HepG2 (cell line): ENCODE measurements at regions of chr2 and their contacts with region 1.

Region 1: DNA sequence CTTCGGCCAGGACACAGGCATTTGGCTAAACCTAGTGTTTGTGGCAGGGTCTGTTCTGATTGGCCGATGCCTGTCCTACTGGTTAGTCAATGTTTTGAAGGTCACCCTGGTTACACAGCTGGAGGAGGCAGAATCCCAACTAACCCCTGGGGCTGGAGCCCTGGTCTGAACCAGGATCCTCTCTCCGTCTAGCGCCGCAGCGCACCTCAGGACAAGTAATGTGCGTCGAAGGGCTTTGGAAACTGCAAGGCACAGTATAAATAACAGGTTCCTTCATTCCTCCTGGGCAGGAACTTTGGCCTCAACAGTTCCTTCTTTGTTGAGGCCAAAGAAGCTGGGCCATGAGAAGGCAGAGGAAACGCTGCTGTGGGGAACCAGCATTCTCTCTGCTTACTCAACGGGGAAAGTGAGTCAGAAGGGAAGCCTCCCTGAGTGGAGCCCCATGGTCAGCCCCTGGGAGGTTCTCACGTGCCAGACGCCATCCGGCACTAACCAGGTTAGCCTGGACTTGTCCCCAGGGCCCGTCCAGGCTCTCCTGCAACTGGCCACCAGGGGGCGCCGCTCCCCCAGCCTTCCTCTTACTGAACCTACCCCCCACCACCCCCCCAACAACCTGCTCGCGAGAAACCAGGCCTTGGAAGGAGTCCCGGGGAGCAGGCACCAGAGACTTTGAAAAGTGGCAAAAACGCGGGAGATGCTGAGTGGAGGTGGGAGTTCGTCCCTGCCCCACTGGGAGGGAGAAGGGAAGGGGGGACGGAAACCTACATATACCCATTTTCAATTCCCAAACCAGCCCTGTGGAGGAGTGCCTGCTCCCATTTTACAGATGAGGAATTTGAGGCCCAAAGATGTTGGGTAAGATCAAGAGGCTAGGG is 19.8 kb downstream of the TEX44 start:
- DNase-seq: peak; percentile 80
- ATAC-seq: peak; percentile 72
- H3K4me3 ChIP-seq: peak overlapping the region in 1 of 3 experiments; percentile 45; a peak in 2 of 6 replicates
- H3K27ac ChIP-seq: peak overlapping the region; percentile 28
- H3K4me1 ChIP-seq: peaks cover 62% of the 10 kb centered on the region
- H3K27me3 ChIP-seq: peaks cover 3 to 8% of the 10 kb centered on the region in 2 experiments; a peak in 2 of 5 replicates
- CTCF ChIP-seq: peak; percentile 96
- EP300 ChIP-seq: no peak
- POLR2A ChIP-seq: no peak
- RAD21 ChIP-seq: peak; percentile 91

Region 2: GRCh38 chr2:231590619-231591018 is 21.8 kb before region 1 on chr2:
- CTCF ChIA-PET with region 1: no interaction called
- POLR2A ChIA-PET with region 1: no interaction called
- in situ Hi-C with region 1: no loop called
- intact Hi-C with region 1: no loop called
- DNase-seq: no peak
- ATAC-seq: no peak; the same call in 2 of the 3 replicates
- H3K4me3 ChIP-seq: no peak overlapping the region
- H3K27ac ChIP-seq: no peak overlapping the region
- H3K4me1 ChIP-seq: no peaks in the 10 kb centered on the region
- H3K27me3 ChIP-seq: peaks cover 4 to 40% of the 10 kb centered on the region in 2 experiments
- CTCF ChIP-seq: no peak
- EP300 ChIP-seq: no peak
- POLR2A ChIP-seq: no peak
- RAD21 ChIP-seq: no peak

Region 3: DNA sequence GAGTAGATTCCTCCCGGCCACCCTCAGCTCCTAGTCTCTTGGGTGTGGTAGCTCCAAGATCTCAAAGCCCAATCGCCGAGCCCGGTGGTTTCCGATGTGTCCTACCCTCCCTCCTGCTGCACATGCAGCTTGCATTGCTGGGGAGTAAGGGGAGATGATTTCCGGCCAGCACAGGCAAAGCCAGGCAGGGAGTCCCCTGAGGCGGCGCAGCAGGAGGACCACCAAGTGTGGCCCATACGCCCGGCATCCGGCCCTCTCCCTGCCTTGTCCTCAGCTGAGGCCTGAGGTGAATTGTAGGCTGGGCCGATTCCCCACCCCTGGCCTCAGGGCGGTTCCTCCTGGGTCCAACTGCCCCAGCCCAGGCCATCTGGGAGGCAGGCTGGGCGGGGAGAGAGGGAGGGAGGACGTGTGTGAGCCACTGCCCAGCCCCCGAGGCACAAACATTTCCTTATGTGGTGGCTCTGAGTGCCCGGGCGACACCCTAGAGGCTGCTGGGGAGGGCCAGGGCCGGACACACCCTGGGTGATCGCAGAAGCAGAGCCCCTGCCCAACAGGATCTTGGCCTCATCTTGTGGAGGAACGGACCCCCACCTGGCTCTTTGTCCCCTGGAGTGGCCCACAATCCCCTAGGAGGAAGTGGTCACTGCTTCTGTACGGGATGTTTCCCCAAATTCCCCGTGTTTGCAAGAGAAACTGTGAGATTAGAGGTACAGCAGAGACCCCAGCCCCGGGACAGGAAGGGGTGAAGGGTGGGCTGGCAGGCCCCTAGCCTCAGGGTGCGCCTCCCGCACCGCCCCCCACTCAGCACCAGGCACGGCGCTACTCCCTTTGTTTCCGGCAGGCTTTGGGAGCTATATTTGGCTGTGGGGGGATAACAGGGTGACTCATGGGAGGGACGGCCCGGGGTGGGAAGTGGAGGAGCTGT is 54.0 kb after region 1 on chr2:
- CTCF ChIA-PET with region 1: interaction called, 39 read pairs
- POLR2A ChIA-PET with region 1: interaction called, 14 read pairs
- in situ Hi-C with region 1: loop called (anchors 5 kb)
- intact Hi-C with region 1: loop called (anchors 1 kb)
- DNase-seq: peak; percentile 83
- ATAC-seq: peak; percentile 84
- H3K4me3 ChIP-seq: peak overlapping the region; percentile 62 to 77 (median 65)
- H3K27ac ChIP-seq: no peak overlapping the region
- H3K4me1 ChIP-seq: peaks cover 42% of the 10 kb centered on the region
- H3K27me3 ChIP-seq: peaks cover 0 to 43% of the 10 kb centered on the region in 2 experiments; a peak in 3 of 5 replicates
- CTCF ChIP-seq: no peak
- EP300 ChIP-seq: no peak
- POLR2A ChIP-seq: no peak; a peak in 1 of 4 replicates
- RAD21 ChIP-seq: no peak